Uterus (tissue), 4 donors: ENCODE measurements at regions of chr1 and their contacts with region 1.

Region 1: DNA sequence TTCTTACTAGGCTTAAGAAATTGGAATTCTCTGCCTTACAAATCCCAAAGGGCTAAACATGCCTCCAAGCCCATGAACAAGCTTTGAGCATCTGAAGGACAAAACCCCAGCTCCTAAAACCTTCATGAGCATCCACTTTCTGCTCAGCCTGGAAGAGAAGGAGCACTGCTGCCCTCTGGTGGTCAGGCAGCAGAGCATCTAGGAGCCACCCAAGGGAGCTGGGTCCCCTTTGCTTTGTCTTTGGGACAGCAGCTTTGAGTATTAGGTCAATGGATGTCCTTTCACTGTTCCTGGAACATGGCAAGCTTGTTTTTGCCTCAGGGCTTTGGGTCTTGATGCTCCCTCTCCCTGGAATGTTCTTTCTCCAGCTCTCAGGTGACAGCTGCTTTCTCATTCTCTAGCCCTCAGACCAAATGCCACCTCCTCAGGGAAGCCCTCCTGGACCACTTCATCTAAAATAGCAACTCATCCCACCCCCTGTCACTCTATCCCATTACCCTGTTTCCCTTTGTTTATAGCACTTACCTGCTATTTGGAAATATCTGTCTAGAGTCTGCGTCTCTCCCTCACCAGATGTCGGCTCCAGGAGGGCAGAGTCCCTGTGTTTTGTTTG is 25.7 kb downstream of the RAB7B start:
- DNase-seq: peak; percentile 45 to 70
- H3K4me3 ChIP-seq: no peak overlapping the region
- H3K27ac ChIP-seq: no peak overlapping the region
- H3K4me1 ChIP-seq: no peaks in the 10 kb centered on the region
- H3K27me3 ChIP-seq: no peaks in the 10 kb centered on the region
- CTCF ChIP-seq: peak; percentile 80 to 95 (median 87)
- POLR2A ChIP-seq: no peak

Region 2: GRCh38 chr1:205791568-205792180 is 185.8 kb before region 1 on chr1:
- intact Hi-C with region 1: loop called (anchors 5 kb)
- DNase-seq: peak; percentile 63 to 65
- H3K4me3 ChIP-seq: no peak overlapping the region
- H3K27ac ChIP-seq: no peak overlapping the region
- H3K4me1 ChIP-seq: no peaks in the 10 kb centered on the region
- H3K27me3 ChIP-seq: no peaks in the 10 kb centered on the region
- CTCF ChIP-seq: peak; percentile 62 to 84 (median 78)
- POLR2A ChIP-seq: no peak

Region 3: GRCh38 chr1:205840146-205840923 is 137.2 kb before region 1 on chr1:
- intact Hi-C with region 1: no loop called
- DNase-seq: no peak
- H3K4me3 ChIP-seq: no peak overlapping the region
- H3K27ac ChIP-seq: no peak overlapping the region
- H3K4me1 ChIP-seq: no peaks in the 10 kb centered on the region
- H3K27me3 ChIP-seq: no peaks in the 10 kb centered on the region
- CTCF ChIP-seq: no peak
- POLR2A ChIP-seq: no peak